K562 (cell line): ENCODE measurements at regions of chr9 and their contacts with region 1.

Region 1: GRCh38 chr9:114805670-114806525 is at the start of gene TNFSF15:
- DNase-seq: no peak
- ATAC-seq: no peak
- H3K4me3 ChIP-seq: no peak within 1 kb of the TSS
- H3K27ac ChIP-seq: no peak within 1 kb of the TSS
- H3K4me1 ChIP-seq: no peaks in the 10 kb centered on the region
- H3K27me3 ChIP-seq: peaks cover 0 to 4% of the 10 kb centered on the region in 2 experiments; a peak in 1 of 5 replicates
- CTCF ChIP-seq: no peak
- EP300 ChIP-seq: no peak
- POLR2A ChIP-seq: no peak
- RAD21 ChIP-seq: no peak
- polyA plus RNA-seq, gene TNFSF15: not detected

Region 2: GRCh38 chr9:114174876-114175771 is 630.8 kb before region 1 on chr9:
- CTCF ChIA-PET with region 1: no interaction called
- POLR2A ChIA-PET with region 1: no interaction called
- in situ Hi-C with region 1: no loop called
- intact Hi-C with region 1: no loop called
- DNase-seq: no peak
- ATAC-seq: no peak; the same call in 2 of the 3 replicates
- H3K4me3 ChIP-seq: no peak overlapping the region
- H3K27ac ChIP-seq: no peak overlapping the region
- H3K4me1 ChIP-seq: peaks cover 0 to 8% of the 10 kb centered on the region in 2 experiments; a peak in 2 of 5 replicates
- H3K27me3 ChIP-seq: peaks cover 2 to 57% of the 10 kb centered on the region in 2 experiments; a peak in 3 of 5 replicates
- CTCF ChIP-seq: no peak
- EP300 ChIP-seq: no peak
- POLR2A ChIP-seq: no peak
- RAD21 ChIP-seq: no peak

Region 3: GRCh38 chr9:114878879-114879569 is 73.1 kb after region 1 on chr9:
- CTCF ChIA-PET with region 1: no interaction called
- POLR2A ChIA-PET with region 1: no interaction called
- in situ Hi-C with region 1: no loop called
- intact Hi-C with region 1: loop called (anchors 5 kb)
- DNase-seq: no peak
- ATAC-seq: no peak
- H3K4me3 ChIP-seq: no peak overlapping the region
- H3K27ac ChIP-seq: no peak overlapping the region
- H3K4me1 ChIP-seq: no peaks in the 10 kb centered on the region
- H3K27me3 ChIP-seq: no peaks in the 10 kb centered on the region
- CTCF ChIP-seq: no peak
- EP300 ChIP-seq: no peak
- POLR2A ChIP-seq: no peak
- RAD21 ChIP-seq: no peak

Region 4: GRCh38 chr9:115042781-115043509 is 237.0 kb after region 1 on chr9:
- CTCF ChIA-PET with region 1: no interaction called
- POLR2A ChIA-PET with region 1: no interaction called
- in situ Hi-C with region 1: no loop called
- intact Hi-C with region 1: no loop called
- DNase-seq: no peak
- ATAC-seq: no peak
- H3K4me3 ChIP-seq: no peak overlapping the region
- H3K27ac ChIP-seq: no peak overlapping the region
- H3K4me1 ChIP-seq: no peaks in the 10 kb centered on the region
- H3K27me3 ChIP-seq: no peaks in the 10 kb centered on the region
- CTCF ChIP-seq: no peak
- EP300 ChIP-seq: no peak
- POLR2A ChIP-seq: no peak
- RAD21 ChIP-seq: no peak